SK-N-SH (cell line): ENCODE measurements at regions of chr11 and their contacts with region 1.

Region 1: GRCh38 chr11:13335319-13335718 is 57.7 kb downstream of the BMAL1 start:
- DNase-seq: peak; percentile 69
- H3K4me3 ChIP-seq: no peak overlapping the region; a peak in 1 of 4 replicates
- H3K27ac ChIP-seq: no peak overlapping the region
- H3K4me1 ChIP-seq: peaks cover 16 to 47% of the 10 kb centered on the region in 2 experiments
- H3K27me3 ChIP-seq: no peaks in the 10 kb centered on the region
- CTCF ChIP-seq: peak; percentile 91
- EP300 ChIP-seq: no peak
- RAD21 ChIP-seq: peak; percentile 90

Region 2: GRCh38 chr11:13238879-13239514 is 96.3 kb before region 1 on chr11:
- CTCF ChIA-PET with region 1: interaction called, 11 read pairs
- POLR2A ChIA-PET with region 1: no interaction called
- DNase-seq: peak; percentile 32
- H3K4me3 ChIP-seq: no peak overlapping the region; a peak in 1 of 4 replicates
- H3K27ac ChIP-seq: no peak overlapping the region
- H3K4me1 ChIP-seq: no peaks in the 10 kb centered on the region
- H3K27me3 ChIP-seq: no peaks in the 10 kb centered on the region
- CTCF ChIP-seq: peak; percentile 91
- EP300 ChIP-seq: no peak
- RAD21 ChIP-seq: peak; percentile 67

Region 3: DNA sequence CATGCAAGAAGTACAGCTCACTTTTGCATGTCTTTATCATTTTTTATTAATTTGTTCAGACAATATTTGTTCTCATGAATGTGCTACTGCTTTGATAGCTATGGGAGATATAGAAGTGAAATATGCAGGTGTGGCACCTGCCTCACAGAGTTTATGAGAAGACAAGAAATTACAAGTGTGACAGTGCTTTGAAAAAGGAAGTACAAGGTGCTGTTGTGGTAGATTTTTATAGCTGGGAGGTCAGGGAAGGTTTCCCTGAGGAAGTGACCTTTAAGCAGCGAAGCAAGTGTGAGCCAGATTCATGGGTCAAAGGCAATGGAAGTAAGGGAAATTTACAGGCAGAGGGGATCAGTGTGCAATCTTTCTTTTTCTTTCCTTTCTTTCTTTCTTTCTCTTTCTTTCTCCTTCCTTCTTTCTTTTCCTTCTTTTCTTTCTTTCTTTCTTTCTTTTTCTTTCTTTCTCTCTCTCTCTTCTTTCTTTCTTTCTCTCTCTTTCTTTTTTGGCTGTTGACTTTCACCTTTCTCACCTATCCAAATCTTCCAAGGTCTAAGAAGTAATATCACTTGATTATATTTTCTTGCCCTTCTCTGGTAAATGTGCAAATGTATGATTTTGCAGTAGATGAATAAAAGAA is 64.1 kb before region 1 on chr11:
- CTCF ChIA-PET with region 1: interaction called, 11 read pairs
- POLR2A ChIA-PET with region 1: no interaction called
- DNase-seq: no peak
- H3K4me3 ChIP-seq: no peak overlapping the region
- H3K27ac ChIP-seq: no peak overlapping the region
- H3K4me1 ChIP-seq: peaks cover 2 to 10% of the 10 kb centered on the region in 2 experiments; a peak in 3 of 4 replicates
- H3K27me3 ChIP-seq: no peaks in the 10 kb centered on the region
- CTCF ChIP-seq: no peak
- EP300 ChIP-seq: no peak
- RAD21 ChIP-seq: no peak

Region 4: GRCh38 chr11:13289081-13289480 is 46.2 kb before region 1 on chr11:
- CTCF ChIA-PET with region 1: interaction called, 28 read pairs
- POLR2A ChIA-PET with region 1: no interaction called
- DNase-seq: peak; percentile 38
- H3K4me3 ChIP-seq: no peak overlapping the region
- H3K27ac ChIP-seq: peak overlapping the region; percentile 38 to 80
- H3K4me1 ChIP-seq: peaks cover 4 to 14% of the 10 kb centered on the region in 2 experiments; a peak in 3 of 4 replicates
- H3K27me3 ChIP-seq: no peaks in the 10 kb centered on the region
- CTCF ChIP-seq: peak; percentile 33
- EP300 ChIP-seq: no peak
- RAD21 ChIP-seq: peak; percentile 62

Region 5: DNA sequence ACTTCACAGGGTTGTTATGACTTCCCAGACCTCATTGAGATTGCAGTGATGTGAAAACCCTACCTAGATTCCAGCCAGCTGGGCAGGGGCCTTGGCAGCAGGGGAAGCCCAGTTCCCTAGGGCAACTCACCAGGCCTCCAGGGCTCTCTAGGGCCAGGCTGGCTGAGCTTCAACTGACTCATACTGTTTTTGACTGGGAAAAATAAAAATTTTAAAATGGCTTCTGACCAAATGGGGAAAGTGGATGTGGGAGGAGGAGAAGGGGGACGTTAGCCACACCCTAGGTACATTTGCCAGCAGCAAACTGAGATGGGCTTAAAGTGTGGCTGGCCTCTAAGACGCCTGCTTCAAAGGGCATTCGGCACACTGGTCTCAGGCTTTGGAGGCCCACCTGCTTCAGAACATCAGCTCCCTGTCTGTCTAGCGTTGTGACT is 18.8 kb before region 1 on chr11:
- CTCF ChIA-PET with region 1: interaction called, 46 read pairs
- POLR2A ChIA-PET with region 1: no interaction called
- DNase-seq: no peak
- H3K4me3 ChIP-seq: no peak overlapping the region
- H3K27ac ChIP-seq: peak overlapping the region; percentile 52 to 72
- H3K4me1 ChIP-seq: peaks cover 6 to 31% of the 10 kb centered on the region in 2 experiments; a peak in 3 of 4 replicates
- H3K27me3 ChIP-seq: no peaks in the 10 kb centered on the region
- CTCF ChIP-seq: no peak
- EP300 ChIP-seq: no peak
- RAD21 ChIP-seq: no peak